IMR-90 (cell line): ENCODE measurements at regions of chrX and their contacts with region 1.

Region 1: GRCh38 chrX:149962859-149963757 is 24.8 kb upstream of the EOLA2 start:
- DNase-seq: peak; percentile 69
- ATAC-seq: peak; percentile 97
- H3K4me3 ChIP-seq: no peak overlapping the region
- H3K27ac ChIP-seq: no peak overlapping the region
- H3K4me1 ChIP-seq: no peaks in the 10 kb centered on the region
- H3K27me3 ChIP-seq: no peaks in the 10 kb centered on the region
- CTCF ChIP-seq: peak; percentile 75
- POLR2A ChIP-seq: no peak
- RAD21 ChIP-seq: peak; percentile 91

Region 2: DNA sequence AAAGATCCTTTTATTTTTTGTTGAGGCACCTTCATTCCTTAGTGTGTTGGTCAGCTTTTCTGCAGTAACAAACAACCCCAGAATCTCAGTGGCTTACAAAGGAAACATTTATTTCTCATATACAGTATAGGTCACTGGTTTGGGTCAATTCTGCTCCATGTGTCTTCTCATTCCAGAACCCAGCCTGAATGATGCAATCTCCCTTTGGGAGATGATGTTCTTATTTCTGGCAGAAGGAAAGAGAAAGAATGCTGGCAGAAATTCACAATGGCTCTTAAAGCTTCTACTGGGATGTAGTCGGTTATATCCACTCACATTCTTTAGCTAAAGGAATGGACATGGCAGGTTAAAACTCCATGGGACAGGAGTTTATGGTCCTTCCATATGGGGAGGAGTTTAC is 500.3 kb before region 1 on chrX:
- CTCF ChIA-PET with region 1: no interaction called
- POLR2A ChIA-PET with region 1: no interaction called
- dilution Hi-C with region 1: no loop called
- in situ Hi-C with region 1: no loop called
- intact Hi-C with region 1: no loop called
- DNase-seq: no peak
- ATAC-seq: no peak
- H3K4me3 ChIP-seq: no peak overlapping the region
- H3K27ac ChIP-seq: no peak overlapping the region
- H3K4me1 ChIP-seq: no peaks in the 10 kb centered on the region
- H3K27me3 ChIP-seq: no peaks in the 10 kb centered on the region
- CTCF ChIP-seq: no peak
- POLR2A ChIP-seq: no peak
- RAD21 ChIP-seq: no peak

Region 3: GRCh38 chrX:150200820-150201287 is 237.7 kb after region 1 on chrX:
- CTCF ChIA-PET with region 1: no interaction called
- POLR2A ChIA-PET with region 1: no interaction called
- dilution Hi-C with region 1: no loop called
- in situ Hi-C with region 1: no loop called
- intact Hi-C with region 1: loop called (anchors 2 kb)
- DNase-seq: peak; percentile 98
- ATAC-seq: peak; percentile 86
- H3K4me3 ChIP-seq: no peak overlapping the region
- H3K27ac ChIP-seq: peak overlapping the region; percentile 24; the same call in 1 of the 2 replicates
- H3K4me1 ChIP-seq: peaks cover 10% of the 10 kb centered on the region
- H3K27me3 ChIP-seq: no peaks in the 10 kb centered on the region
- CTCF ChIP-seq: no peak
- POLR2A ChIP-seq: no peak
- RAD21 ChIP-seq: no peak

Region 4: DNA sequence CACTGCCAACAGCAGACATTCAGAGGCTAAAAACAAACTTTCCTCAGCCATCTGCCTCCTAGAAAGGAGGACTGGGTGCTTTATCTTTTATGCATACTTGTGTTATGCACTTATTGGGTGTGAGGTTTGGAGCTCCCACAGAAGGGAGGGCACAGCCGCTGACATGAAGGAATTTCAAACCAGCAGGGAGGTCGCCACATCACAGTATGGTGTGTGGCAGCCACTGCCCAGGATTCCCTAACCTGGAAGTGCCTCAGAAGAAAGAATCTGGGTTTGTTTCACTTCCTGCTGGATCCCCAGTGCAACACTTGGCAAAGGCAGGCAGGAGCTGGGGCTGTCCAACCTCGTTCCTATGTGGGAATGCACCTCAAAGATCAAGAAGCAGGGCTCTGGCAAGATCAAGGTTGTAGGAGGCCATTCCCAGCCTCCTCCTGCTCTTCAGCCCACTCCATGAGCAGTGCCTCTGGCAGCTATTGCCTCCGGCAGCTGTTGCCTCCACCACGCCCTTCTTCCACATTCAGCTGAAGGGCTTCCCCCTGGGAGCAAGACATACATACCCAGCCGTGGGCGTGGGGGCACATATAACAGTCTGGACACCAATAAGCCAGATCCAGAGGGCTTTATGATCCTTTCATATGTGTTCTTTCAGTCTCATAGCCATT is 291.0 kb after region 1 on chrX:
- CTCF ChIA-PET with region 1: no interaction called
- POLR2A ChIA-PET with region 1: no interaction called
- dilution Hi-C with region 1: no loop called
- in situ Hi-C with region 1: no loop called
- intact Hi-C with region 1: loop called (anchors 5 kb)
- DNase-seq: no peak
- ATAC-seq: no peak
- H3K4me3 ChIP-seq: no peak overlapping the region
- H3K27ac ChIP-seq: no peak overlapping the region
- H3K4me1 ChIP-seq: no peaks in the 10 kb centered on the region
- H3K27me3 ChIP-seq: no peaks in the 10 kb centered on the region; the same call in 1 of the 2 replicates
- CTCF ChIP-seq: no peak
- POLR2A ChIP-seq: no peak
- RAD21 ChIP-seq: no peak

Region 5: DNA sequence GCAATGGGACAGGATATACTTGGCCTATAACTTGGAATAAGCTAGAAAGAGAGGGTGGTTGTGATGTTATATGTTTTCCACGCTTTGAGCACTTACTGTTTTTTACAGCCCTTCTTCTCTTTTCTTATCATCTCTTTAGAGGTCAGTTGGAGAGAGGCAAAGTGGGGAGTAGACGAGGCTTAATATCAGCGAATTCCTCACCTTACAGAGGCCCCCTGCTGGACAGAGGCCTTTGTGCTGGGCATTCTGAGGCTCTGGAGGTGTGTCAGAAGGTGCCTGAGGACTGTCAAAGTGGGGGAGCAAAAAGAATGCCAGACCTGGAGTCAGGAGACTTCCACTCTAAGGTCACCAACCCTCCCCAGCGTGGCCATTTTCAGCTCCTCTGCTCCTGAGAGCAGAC is 442.5 kb after region 1 on chrX:
- CTCF ChIA-PET with region 1: no interaction called
- POLR2A ChIA-PET with region 1: no interaction called
- dilution Hi-C with region 1: no loop called
- in situ Hi-C with region 1: no loop called
- intact Hi-C with region 1: loop called (anchors 1 kb)
- DNase-seq: no peak
- ATAC-seq: no peak
- H3K4me3 ChIP-seq: no peak overlapping the region
- H3K27ac ChIP-seq: no peak overlapping the region
- H3K4me1 ChIP-seq: no peaks in the 10 kb centered on the region; the same call in 1 of the 2 replicates
- H3K27me3 ChIP-seq: no peaks in the 10 kb centered on the region
- CTCF ChIP-seq: 0 out of 2 replicates have a peak, but pooled peaks have one; percentile 14
- POLR2A ChIP-seq: no peak
- RAD21 ChIP-seq: no peak

Region 6: DNA sequence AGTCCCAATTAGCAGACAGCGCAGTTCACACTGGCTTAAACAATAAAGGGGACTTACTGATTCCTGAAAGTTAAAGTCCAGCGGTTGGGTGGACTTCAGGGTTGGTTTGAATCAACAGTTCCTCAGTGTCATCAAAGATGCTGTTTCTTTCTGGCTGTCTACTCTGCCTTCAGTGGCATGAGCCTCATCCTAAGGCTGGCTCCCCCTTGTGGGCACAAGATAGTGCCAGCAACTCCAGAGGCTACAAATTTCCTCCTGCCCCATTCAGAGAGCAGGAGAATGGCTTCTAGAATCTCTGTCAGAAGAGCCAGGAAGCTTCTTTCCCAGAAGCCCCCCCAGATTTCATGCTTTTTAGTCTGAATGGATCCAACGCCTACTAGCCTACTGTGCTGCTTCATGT is 522.9 kb after region 1 on chrX:
- CTCF ChIA-PET with region 1: no interaction called
- POLR2A ChIA-PET with region 1: no interaction called
- dilution Hi-C with region 1: no loop called
- in situ Hi-C with region 1: loop called (anchors 25 kb)
- intact Hi-C with region 1: loop called (anchors 1 kb)
- DNase-seq: peak; percentile 59
- ATAC-seq: peak; percentile 75
- H3K4me3 ChIP-seq: no peak overlapping the region
- H3K27ac ChIP-seq: no peak overlapping the region
- H3K4me1 ChIP-seq: peaks cover 3% of the 10 kb centered on the region; the same call in 1 of the 2 replicates
- H3K27me3 ChIP-seq: no peaks in the 10 kb centered on the region
- CTCF ChIP-seq: peak; percentile 57
- POLR2A ChIP-seq: no peak
- RAD21 ChIP-seq: peak; percentile 63

Region 7: DNA sequence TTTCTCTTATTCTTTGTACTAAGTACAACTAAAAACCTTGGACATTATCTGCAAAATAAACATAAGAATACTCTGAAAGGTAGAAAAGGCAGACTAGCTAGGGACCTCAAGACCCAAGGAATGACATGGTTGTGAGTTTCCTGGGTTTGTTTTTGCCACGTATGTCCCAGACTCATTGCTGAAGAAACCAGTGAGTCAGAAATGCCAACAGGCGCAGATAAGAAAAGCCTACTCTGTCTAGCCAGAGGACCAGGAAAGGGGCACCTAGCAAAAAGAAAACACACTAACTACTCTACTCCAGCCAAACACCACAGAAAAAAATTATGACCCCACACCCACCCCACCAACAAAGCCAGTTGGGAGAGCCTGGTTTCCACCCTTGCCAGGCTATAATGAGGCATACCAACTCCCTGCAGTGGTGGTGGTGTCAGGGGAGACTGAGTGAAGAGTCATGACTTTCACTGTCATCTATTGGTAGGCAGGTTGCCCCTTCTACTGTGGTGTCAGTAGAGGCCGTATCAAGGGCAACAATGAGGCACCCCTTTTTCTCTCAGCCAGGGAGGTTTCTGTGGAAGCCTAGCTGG is 741.0 kb after region 1 on chrX:
- CTCF ChIA-PET with region 1: no interaction called
- POLR2A ChIA-PET with region 1: no interaction called
- dilution Hi-C with region 1: no loop called
- in situ Hi-C with region 1: loop called (anchors 25 kb)
- intact Hi-C with region 1: no loop called
- DNase-seq: peak; percentile 71
- ATAC-seq: peak; percentile 48; the same call in 1 of the 2 replicates
- H3K4me3 ChIP-seq: no peak overlapping the region
- H3K27ac ChIP-seq: peak overlapping the region; percentile 35; the same call in 1 of the 2 replicates
- H3K4me1 ChIP-seq: peaks cover 4% of the 10 kb centered on the region; the same call in 1 of the 2 replicates
- H3K27me3 ChIP-seq: no peaks in the 10 kb centered on the region
- CTCF ChIP-seq: no peak
- POLR2A ChIP-seq: no peak
- RAD21 ChIP-seq: no peak

Region 8: DNA sequence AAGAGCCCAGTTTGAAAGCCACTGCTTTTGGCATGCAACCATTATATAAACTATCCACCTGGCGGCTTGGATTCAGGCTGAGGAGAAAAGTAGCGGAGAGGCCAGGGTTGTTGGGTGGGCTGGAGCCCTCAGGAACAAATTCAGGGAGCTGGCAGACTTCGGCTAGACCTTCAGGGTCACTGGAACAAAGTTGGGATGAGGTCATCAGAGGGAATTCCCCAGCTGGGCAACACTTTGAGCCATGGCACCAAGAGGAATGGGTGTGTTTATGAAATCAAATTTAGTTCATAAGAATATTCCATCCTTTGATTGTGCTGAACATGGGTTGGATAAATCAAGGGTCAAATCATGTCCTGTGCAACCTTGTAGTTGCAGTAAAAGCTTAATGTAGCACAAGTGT is 752.1 kb after region 1 on chrX:
- CTCF ChIA-PET with region 1: no interaction called
- POLR2A ChIA-PET with region 1: no interaction called
- dilution Hi-C with region 1: no loop called
- in situ Hi-C with region 1: loop called (anchors 25 kb)
- intact Hi-C with region 1: loop called (anchors 5 kb)
- DNase-seq: no peak
- ATAC-seq: no peak
- H3K4me3 ChIP-seq: no peak overlapping the region
- H3K27ac ChIP-seq: no peak overlapping the region
- H3K4me1 ChIP-seq: 0 out of 2 replicates have a peak, but pooled peaks cover 2% of the 10 kb centered on the region
- H3K27me3 ChIP-seq: no peaks in the 10 kb centered on the region
- CTCF ChIP-seq: no peak
- POLR2A ChIP-seq: no peak
- RAD21 ChIP-seq: no peak